Right ventricle myocardium inferior (tissue), 1 donor: ENCODE measurements at regions of chr12 and their contacts with region 1.

Region 1: DNA sequence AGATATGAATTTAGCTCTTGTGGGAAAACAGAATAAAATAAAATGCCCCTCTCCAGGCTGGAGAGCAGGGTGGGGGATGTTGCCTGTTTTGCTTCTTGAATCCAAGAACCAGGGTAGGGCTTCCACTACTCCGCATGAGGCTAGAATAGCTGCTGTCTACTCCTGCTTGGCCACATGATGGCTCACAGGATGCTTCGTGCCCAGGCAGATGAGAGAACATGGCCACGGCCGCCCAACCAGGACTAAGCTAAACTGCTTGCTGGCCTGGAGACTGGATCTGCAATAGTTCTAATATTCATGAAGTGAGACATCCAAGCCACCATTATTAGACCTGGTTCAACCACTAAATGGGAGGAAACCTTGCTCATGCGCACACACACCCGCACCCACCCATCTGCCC is 122.2 kb upstream of the METAP2 start:
- DNase-seq: no peak
- ATAC-seq: peak; percentile 89

Region 2: GRCh38 chr12:95532851-95533250 is 181.1 kb after region 1 on chr12:
- intact Hi-C with region 1: loop called (anchors 1 kb)
- DNase-seq: no peak
- ATAC-seq: no peak

Region 3: DNA sequence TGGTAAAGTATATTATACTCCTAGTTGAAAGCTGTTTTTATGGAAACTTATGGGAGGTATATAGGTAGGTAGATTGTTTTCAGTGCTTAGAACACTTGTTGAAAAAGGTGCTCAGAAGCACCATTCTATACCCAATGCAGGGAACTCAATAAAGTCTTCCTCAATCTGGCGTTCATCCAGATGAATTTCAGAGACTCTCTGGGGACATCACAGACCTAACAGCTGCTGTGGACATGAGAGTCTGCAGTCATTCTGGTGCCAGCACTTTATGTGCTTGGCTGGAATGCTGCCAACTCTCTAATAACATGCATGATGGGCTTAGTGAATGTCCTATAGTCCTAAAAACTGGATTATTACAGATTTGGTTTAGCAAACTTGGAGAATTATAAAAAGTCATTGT is 322.9 kb after region 1 on chr12:
- intact Hi-C with region 1: no loop called
- DNase-seq: no peak
- ATAC-seq: peak; percentile 58